ENCODE measurements at regions of chr18 and their contacts with region 1.

Region 1: GRCh38 chr18:50374753-50375391 is at the start of gene SKA1:
- DNase-seq: peak; percentile 92 to 97 (median 95)
- ATAC-seq: peak; percentile 99 to 100 (median 100)
- H3K4me3 ChIP-seq: peak within 1 kb of the TSS; percentile 9 to 69 (median 58)
- H3K27ac ChIP-seq: peak within 1 kb of the TSS in 11 of 12 donors; percentile 74 to 86 (median 82)
- H3K4me1 ChIP-seq: peaks cover 0 to 13% (median 8%) of the 10 kb centered on the region in 12 donors
- H3K27me3 ChIP-seq: no peaks in the 10 kb centered on the region
- CTCF ChIP-seq: no peak
- POLR2A ChIP-seq: peak in 1 of 2 donors; percentile 81
- total RNA-seq, gene SKA1: 0.16 to 4.4 (median 0.38) TPM in 6 of 9 donors, not detected in the others

Region 2: GRCh38 chr18:50266248-50266704 is 108.6 kb before region 1 on chr18 and contains the start of gene CFAP53:
- intact Hi-C with region 1: loop called in 1 of 10 experiments (anchors 5 kb)
- DNase-seq: peak; percentile 94 to 97 (median 96)
- ATAC-seq: peak; percentile 95 to 98 (median 98)
- H3K4me3 ChIP-seq: peak within 1 kb of the TSS; percentile 40 to 83 (median 68)
- H3K27ac ChIP-seq: peak within 1 kb of the TSS in 10 of 12 donors; percentile 6 to 57 (median 20)
- H3K4me1 ChIP-seq: peaks cover 4 to 32% (median 14%) of the 10 kb centered on the region in 12 donors
- H3K27me3 ChIP-seq: no peaks in the 10 kb centered on the region
- CTCF ChIP-seq: no peak
- POLR2A ChIP-seq: peak in 1 of 2 donors; percentile 39
- total RNA-seq, gene CFAP53: 0.14 to 0.62 (median 0.16) TPM in 3 of 9 donors, not detected in the others

Region 3: GRCh38 chr18:50281295-50281971 is 93.4 kb before region 1 on chr18 and contains the start of gene MBD1:
- intact Hi-C with region 1: loop called in 4 of 10 experiments (anchors 5 to 10 kb)
- DNase-seq: peak; percentile 97 to 99 (median 99)
- ATAC-seq: peak; percentile 96 to 97 (median 96)
- H3K4me3 ChIP-seq: peak within 1 kb of the TSS; percentile 62 to 99 (median 87)
- H3K27ac ChIP-seq: peak within 1 kb of the TSS; percentile 41 to 96 (median 92)
- H3K4me1 ChIP-seq: peaks cover 3 to 36% (median 23%) of the 10 kb centered on the region in 12 donors
- H3K27me3 ChIP-seq: no peaks in the 10 kb centered on the region
- CTCF ChIP-seq: peak in 10 of 12 donors; percentile 23 to 61 (median 36)
- POLR2A ChIP-seq: peak in 1 of 2 donors; percentile 79
- total RNA-seq, gene MBD1: 43.9 to 87.7 (median 51.4) TPM

Region 4: GRCh38 chr18:50287441-50288347 is 87.2 kb before region 1 on chr18 and contains the start of gene CXXC1:
- intact Hi-C with region 1: loop called in 5 of 10 experiments (anchors 5 to 10 kb)
- DNase-seq: peak; percentile 97 to 99 (median 98)
- ATAC-seq: peak; percentile 95 to 97 (median 96)
- H3K4me3 ChIP-seq: peak within 1 kb of the TSS; percentile 55 to 90 (median 77)
- H3K27ac ChIP-seq: peak within 1 kb of the TSS; percentile 45 to 94 (median 86)
- H3K4me1 ChIP-seq: peaks cover 0 to 20% (median 0%) of the 10 kb centered on the region in 12 donors
- H3K27me3 ChIP-seq: no peaks in the 10 kb centered on the region
- CTCF ChIP-seq: peak; percentile 36 to 63 (median 48)
- POLR2A ChIP-seq: peak in 1 of 2 donors; percentile 44
- total RNA-seq, gene CXXC1: 18.3 to 36.7 (median 33.2) TPM

Region 5: GRCh38 chr18:50297621-50298442 is 77.0 kb before region 1 on chr18:
- intact Hi-C with region 1: loop called in 1 of 10 experiments (anchors 10 kb)
- DNase-seq: peak; percentile 77 to 89 (median 84)
- ATAC-seq: peak; percentile 58 to 98 (median 96)
- H3K4me3 ChIP-seq: peak overlapping the region; percentile 8 to 67 (median 48)
- H3K27ac ChIP-seq: no peak overlapping the region
- H3K4me1 ChIP-seq: peaks cover 0 to 14% (median 5%) of the 10 kb centered on the region in 12 donors
- H3K27me3 ChIP-seq: peaks cover 3 to 42% (median 8%) of the 10 kb centered on the region in 9 donors
- CTCF ChIP-seq: no peak
- POLR2A ChIP-seq: no peak